GM12878 (cell line): ENCODE measurements at regions of chr12 and their contacts with region 1.

Region 1: DNA sequence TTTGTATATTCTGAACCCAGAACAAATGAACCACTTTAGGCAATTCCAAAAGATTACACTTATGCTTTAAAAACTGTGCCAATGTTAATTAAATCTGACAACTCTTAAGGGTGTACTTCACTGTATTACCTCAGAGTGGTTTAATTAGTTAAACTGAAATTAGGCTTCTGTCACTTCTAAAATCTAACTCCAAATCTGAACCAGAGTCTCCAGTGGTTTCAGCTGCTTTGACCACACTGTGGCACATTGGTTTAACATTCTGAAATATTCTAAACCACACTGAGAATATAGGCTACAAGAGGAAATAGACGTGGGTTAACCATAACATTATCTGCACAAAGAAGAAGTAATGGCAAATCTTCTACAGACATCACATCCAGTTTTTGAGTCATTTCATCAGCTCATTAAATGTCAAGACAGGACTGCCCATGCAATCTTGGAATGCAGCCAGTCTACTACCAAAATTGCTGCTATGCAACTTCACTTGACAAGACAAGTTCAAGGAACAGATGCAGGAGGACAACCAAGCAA is 94.8 kb downstream of the LRP6 start:
- DNase-seq: peak; percentile 90
- ATAC-seq: peak; percentile 95
- H3K4me3 ChIP-seq: no peak overlapping the region
- H3K27ac ChIP-seq: no peak overlapping the region
- H3K4me1 ChIP-seq: peaks cover 15% of the 10 kb centered on the region
- H3K27me3 ChIP-seq: no peaks in the 10 kb centered on the region
- CTCF ChIP-seq: no peak; a peak in 1 of 6 replicates
- EP300 ChIP-seq: peak; percentile 69 to 76; a peak in 3 of 4 replicates
- POLR2A ChIP-seq: no peak
- RAD21 ChIP-seq: 0 out of 2 replicates have a peak, but pooled peaks have one; percentile 34

Region 2: GRCh38 chr12:11460343-11461023 is 711.6 kb before region 1 on chr12:
- CTCF ChIA-PET with region 1: no interaction called
- POLR2A ChIA-PET with region 1: no interaction called
- RAD21 ChIA-PET with region 1: no interaction called
- SMC1A ChIA-PET with region 1: no interaction called
- in situ Hi-C with region 1: no loop called
- intact Hi-C with region 1: no loop called
- DNase-seq: no peak
- ATAC-seq: no peak
- H3K4me3 ChIP-seq: no peak overlapping the region
- H3K27ac ChIP-seq: no peak overlapping the region
- H3K4me1 ChIP-seq: no peaks in the 10 kb centered on the region
- H3K27me3 ChIP-seq: no peaks in the 10 kb centered on the region
- CTCF ChIP-seq: no peak
- EP300 ChIP-seq: no peak
- POLR2A ChIP-seq: no peak
- RAD21 ChIP-seq: no peak

Region 3: GRCh38 chr12:12123036-12123604 is 48.9 kb before region 1 on chr12:
- CTCF ChIA-PET with region 1: no interaction called
- POLR2A ChIA-PET with region 1: no interaction called
- RAD21 ChIA-PET with region 1: no interaction called
- SMC1A ChIA-PET with region 1: no interaction called
- in situ Hi-C with region 1: no loop called
- intact Hi-C with region 1: no loop called
- DNase-seq: no peak
- ATAC-seq: no peak
- H3K4me3 ChIP-seq: no peak overlapping the region
- H3K27ac ChIP-seq: no peak overlapping the region
- H3K4me1 ChIP-seq: no peaks in the 10 kb centered on the region
- H3K27me3 ChIP-seq: no peaks in the 10 kb centered on the region
- CTCF ChIP-seq: no peak
- EP300 ChIP-seq: no peak
- POLR2A ChIP-seq: no peak
- RAD21 ChIP-seq: no peak

Region 4: DNA sequence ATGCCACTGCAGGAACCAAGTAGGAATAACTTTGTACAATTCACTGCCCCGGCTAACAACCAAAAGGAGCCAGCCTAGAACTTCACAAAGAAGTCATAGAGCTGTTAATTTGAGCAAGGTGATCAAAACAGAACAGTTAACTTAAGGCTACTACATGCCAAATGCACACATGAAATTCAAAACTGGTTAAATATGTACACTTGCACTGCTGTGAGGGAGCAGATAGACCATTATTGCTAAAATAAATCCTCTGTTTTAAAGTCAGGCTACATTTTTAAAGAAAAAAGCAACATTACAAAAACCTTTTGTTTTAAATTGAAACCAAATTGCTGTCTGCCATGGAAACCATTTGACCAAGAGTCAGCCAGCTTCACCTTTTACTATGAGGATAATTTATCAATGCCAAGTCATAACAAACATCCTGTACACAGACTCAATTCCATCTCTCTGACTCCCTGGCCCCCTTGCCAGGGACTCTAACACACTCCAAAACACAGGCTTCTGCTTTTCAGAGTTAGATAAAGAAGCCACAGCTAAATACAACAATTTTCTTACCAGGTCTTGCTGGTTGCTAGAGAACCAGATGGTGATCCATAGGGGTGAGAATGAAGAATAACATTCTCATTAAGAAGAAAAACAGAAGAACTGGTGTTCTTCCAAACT is 10.8 kb after region 1 on chr12:
- CTCF ChIA-PET with region 1: interaction called, 6 read pairs
- POLR2A ChIA-PET with region 1: no interaction called
- RAD21 ChIA-PET with region 1: interaction called, 3 read pairs
- SMC1A ChIA-PET with region 1: interaction called, 12 read pairs
- in situ Hi-C with region 1: no loop called
- intact Hi-C with region 1: no loop called
- DNase-seq: no peak
- ATAC-seq: peak; percentile 55; the same call in 2 of the 3 replicates
- H3K4me3 ChIP-seq: no peak overlapping the region
- H3K27ac ChIP-seq: no peak overlapping the region
- H3K4me1 ChIP-seq: no peaks in the 10 kb centered on the region
- H3K27me3 ChIP-seq: no peaks in the 10 kb centered on the region
- CTCF ChIP-seq: no peak
- EP300 ChIP-seq: no peak
- POLR2A ChIP-seq: no peak
- RAD21 ChIP-seq: no peak

Region 5: DNA sequence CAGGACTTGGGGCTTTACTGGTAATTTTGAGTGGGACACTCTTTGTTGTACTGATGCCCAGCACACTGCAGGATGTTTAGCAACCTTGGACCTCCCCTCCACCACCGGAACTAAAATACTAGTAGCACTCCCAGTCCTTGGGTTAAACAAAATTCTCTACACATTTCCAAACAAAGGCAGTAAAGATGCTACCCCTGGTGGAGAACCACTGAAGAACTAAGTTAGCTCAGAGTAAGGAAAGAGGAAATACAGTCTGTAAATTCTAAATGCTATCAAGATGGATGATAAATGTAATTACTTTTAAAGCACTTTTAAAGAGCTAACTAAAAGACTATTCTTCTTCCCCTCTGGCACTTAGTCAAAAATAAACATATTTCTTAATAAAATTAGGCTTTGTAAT is 30.7 kb after region 1 on chr12:
- CTCF ChIA-PET with region 1: no interaction called
- POLR2A ChIA-PET with region 1: no interaction called
- RAD21 ChIA-PET with region 1: no interaction called
- SMC1A ChIA-PET with region 1: no interaction called
- in situ Hi-C with region 1: no loop called
- intact Hi-C with region 1: no loop called
- DNase-seq: no peak
- ATAC-seq: no peak
- H3K4me3 ChIP-seq: no peak overlapping the region
- H3K27ac ChIP-seq: no peak overlapping the region
- H3K4me1 ChIP-seq: peaks cover 4% of the 10 kb centered on the region; the same call in 1 of the 2 replicates
- H3K27me3 ChIP-seq: no peaks in the 10 kb centered on the region
- CTCF ChIP-seq: no peak
- EP300 ChIP-seq: no peak
- POLR2A ChIP-seq: no peak
- RAD21 ChIP-seq: 0 out of 2 replicates have a peak, but pooled peaks have one; percentile 20

Region 6: GRCh38 chr12:12214635-12215131 is 42.6 kb after region 1 on chr12:
- CTCF ChIA-PET with region 1: interaction called, 3 read pairs
- POLR2A ChIA-PET with region 1: no interaction called
- RAD21 ChIA-PET with region 1: interaction called, 3 read pairs
- SMC1A ChIA-PET with region 1: interaction called, 3 read pairs
- in situ Hi-C with region 1: no loop called
- intact Hi-C with region 1: loop called (anchors 5 kb)
- DNase-seq: peak; percentile 35
- ATAC-seq: peak; percentile 73
- H3K4me3 ChIP-seq: no peak overlapping the region
- H3K27ac ChIP-seq: no peak overlapping the region
- H3K4me1 ChIP-seq: peaks cover 6% of the 10 kb centered on the region
- H3K27me3 ChIP-seq: no peaks in the 10 kb centered on the region
- CTCF ChIP-seq: no peak
- EP300 ChIP-seq: no peak
- POLR2A ChIP-seq: no peak
- RAD21 ChIP-seq: no peak

Region 7: GRCh38 chr12:12266873-12267741 is 95.1 kb after region 1 on chr12 and contains the start of gene LRP6:
- CTCF ChIA-PET with region 1: no interaction called
- POLR2A ChIA-PET with region 1: interaction called, 3 read pairs
- RAD21 ChIA-PET with region 1: no interaction called
- SMC1A ChIA-PET with region 1: interaction called, 3 read pairs
- in situ Hi-C with region 1: no loop called
- intact Hi-C with region 1: loop called (anchors 5 kb)
- DNase-seq: peak; percentile 40
- ATAC-seq: peak; percentile 92
- H3K4me3 ChIP-seq: peak within 1 kb of the TSS; percentile 92
- H3K27ac ChIP-seq: peak within 1 kb of the TSS; percentile 80
- H3K4me1 ChIP-seq: no peaks in the 10 kb centered on the region
- H3K27me3 ChIP-seq: no peaks in the 10 kb centered on the region
- CTCF ChIP-seq: no peak
- EP300 ChIP-seq: no peak
- POLR2A ChIP-seq: peak; percentile 80
- RAD21 ChIP-seq: no peak
- polyA plus RNA-seq, gene LRP6: 1.5 to 8.4 TPM